Activated CD4-positive, alpha-beta T cell treated with anti-CD3 and anti-CD28 coated beads for 36 hours (primary cell): ENCODE measurements at regions of chr2 and their contacts with region 1.

Region 1: GRCh38 chr2:74587664-74588277 is 33.3 kb downstream of the DOK1 start:
- DNase-seq: peak; percentile 75
- ATAC-seq: peak; percentile 62
- H3K4me3 Mint-ChIP-seq: no peak overlapping the region
- H3K27ac Mint-ChIP-seq: no peak overlapping the region
- H3K4me1 Mint-ChIP-seq: peaks cover 26% of the 10 kb centered on the region
- H3K27me3 Mint-ChIP-seq: peaks cover 3% of the 10 kb centered on the region

Region 2: DNA sequence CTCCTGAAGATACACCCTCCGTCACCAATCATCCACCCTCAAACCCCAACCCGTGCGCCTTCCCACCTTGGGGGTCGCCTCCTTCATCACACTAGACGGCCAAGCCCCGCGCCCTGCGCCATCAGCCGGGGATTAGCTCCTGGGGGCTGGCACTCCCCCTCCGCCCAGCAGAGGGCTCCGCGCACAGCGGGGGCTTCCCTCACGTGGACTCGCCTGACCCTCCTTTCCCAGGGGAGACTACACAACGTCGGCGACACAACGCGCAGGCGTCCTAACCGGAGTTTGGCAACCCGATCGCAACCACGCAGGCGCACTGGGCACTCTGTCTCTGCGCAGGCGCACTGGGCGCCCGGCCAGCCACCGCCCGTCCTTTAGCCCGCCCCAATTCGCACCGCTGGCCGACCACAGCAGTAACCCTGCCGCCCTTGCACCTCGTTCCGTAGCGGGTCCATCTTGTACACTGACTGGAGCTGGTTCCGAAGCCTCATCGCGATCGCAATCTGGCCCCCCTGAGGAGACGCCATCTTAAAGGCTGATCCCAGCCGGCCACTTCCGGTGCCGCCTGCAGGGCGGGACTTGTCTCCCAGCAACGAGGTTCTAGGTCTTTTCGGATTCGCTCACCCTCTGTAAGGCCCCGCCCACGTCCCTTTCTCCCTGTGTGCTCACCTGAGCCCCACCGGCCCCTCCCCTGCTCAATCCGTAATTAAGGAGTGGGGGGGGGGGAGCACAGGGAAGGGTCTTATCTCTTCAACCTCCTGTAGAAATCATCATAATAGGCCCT is 80.4 kb before region 1 on chr2 and contains the start of gene PCGF1:
- CTCF ChIA-PET with region 1: interaction called, 6 read pairs
- POLR2A ChIA-PET with region 1: no interaction called
- intact Hi-C with region 1: loop called in 1 of 2 experiments (anchors 5 kb)
- DNase-seq: peak; percentile 99
- ATAC-seq: peak; percentile 92
- H3K4me3 Mint-ChIP-seq: peak within 1 kb of the TSS; percentile 93
- H3K27ac Mint-ChIP-seq: peak within 1 kb of the TSS; percentile 99
- H3K4me1 Mint-ChIP-seq: peaks cover 40% of the 10 kb centered on the region
- H3K27me3 Mint-ChIP-seq: peaks cover 38% of the 10 kb centered on the region
- total RNA-seq, gene PCGF1: 21.7 to 28.7 TPM

Region 3: GRCh38 chr2:74566754-74567085 is 21.1 kb before region 1 on chr2:
- CTCF ChIA-PET with region 1: interaction called, 10 read pairs
- POLR2A ChIA-PET with region 1: interaction called, 5 read pairs
- intact Hi-C with region 1: loop called in 1 of 2 experiments (anchors 2 kb)
- DNase-seq: no peak
- ATAC-seq: peak; percentile 65
- H3K4me3 Mint-ChIP-seq: no peak overlapping the region
- H3K27ac Mint-ChIP-seq: peak overlapping the region; percentile 78
- H3K4me1 Mint-ChIP-seq: peaks cover 32% of the 10 kb centered on the region
- H3K27me3 Mint-ChIP-seq: peaks cover 25% of the 10 kb centered on the region

Region 4: DNA sequence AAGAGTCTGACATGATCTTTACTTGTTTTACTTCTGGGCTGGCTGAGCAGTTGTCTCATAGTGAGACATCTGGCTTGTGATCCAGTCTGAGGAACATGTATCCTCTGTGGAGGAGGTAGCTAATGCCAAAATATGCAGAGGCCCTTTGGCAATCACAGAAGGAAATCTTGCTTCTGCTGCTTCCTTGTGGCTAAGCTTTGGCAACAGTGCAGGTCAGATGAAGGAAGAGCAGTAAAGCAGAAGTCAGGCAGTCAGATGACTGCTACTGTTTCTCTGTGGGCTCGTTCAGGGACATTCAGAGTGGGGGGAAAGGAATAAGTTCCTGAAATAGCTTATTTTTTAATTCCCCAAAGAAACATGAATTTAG is 10.9 kb before region 1 on chr2:
- CTCF ChIA-PET with region 1: interaction called, 18 read pairs
- POLR2A ChIA-PET with region 1: no interaction called
- intact Hi-C with region 1: no loop called
- DNase-seq: no peak
- ATAC-seq: no peak
- H3K4me3 Mint-ChIP-seq: no peak overlapping the region
- H3K27ac Mint-ChIP-seq: no peak overlapping the region
- H3K4me1 Mint-ChIP-seq: peaks cover 23% of the 10 kb centered on the region
- H3K27me3 Mint-ChIP-seq: peaks cover 1% of the 10 kb centered on the region